MCF 10A (cell line): ENCODE measurements at regions of chr4 and their contacts with region 1.

Region 1: DNA sequence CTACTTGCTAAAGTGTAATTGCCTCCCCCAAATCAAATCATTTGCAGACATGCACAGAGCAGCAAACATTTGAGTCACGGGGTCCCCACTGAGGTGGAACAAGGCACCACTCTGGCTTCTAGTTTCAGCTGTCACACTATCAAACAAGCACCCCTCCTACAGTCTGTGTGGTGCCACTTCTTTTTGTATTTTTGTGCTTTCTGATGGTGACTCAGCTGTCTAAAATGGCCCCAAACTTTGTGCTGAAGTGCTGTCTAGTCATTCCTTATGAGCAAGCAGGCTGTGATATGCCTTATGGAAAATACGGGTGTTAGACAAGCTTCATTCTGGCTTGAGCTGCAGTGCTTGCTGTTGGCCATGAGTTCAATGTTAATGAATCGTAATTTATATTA is 15.4 kb downstream of the IGFBP7 start:
- DNase-seq: no peak
- H3K4me3 Mint-ChIP-seq: no peak overlapping the region
- H3K27ac Mint-ChIP-seq: no peak overlapping the region
- H3K4me1 Mint-ChIP-seq: peaks cover 29% of the 10 kb centered on the region
- H3K27me3 Mint-ChIP-seq: no peaks in the 10 kb centered on the region
- CTCF ChIP-seq: no peak

Region 2: DNA sequence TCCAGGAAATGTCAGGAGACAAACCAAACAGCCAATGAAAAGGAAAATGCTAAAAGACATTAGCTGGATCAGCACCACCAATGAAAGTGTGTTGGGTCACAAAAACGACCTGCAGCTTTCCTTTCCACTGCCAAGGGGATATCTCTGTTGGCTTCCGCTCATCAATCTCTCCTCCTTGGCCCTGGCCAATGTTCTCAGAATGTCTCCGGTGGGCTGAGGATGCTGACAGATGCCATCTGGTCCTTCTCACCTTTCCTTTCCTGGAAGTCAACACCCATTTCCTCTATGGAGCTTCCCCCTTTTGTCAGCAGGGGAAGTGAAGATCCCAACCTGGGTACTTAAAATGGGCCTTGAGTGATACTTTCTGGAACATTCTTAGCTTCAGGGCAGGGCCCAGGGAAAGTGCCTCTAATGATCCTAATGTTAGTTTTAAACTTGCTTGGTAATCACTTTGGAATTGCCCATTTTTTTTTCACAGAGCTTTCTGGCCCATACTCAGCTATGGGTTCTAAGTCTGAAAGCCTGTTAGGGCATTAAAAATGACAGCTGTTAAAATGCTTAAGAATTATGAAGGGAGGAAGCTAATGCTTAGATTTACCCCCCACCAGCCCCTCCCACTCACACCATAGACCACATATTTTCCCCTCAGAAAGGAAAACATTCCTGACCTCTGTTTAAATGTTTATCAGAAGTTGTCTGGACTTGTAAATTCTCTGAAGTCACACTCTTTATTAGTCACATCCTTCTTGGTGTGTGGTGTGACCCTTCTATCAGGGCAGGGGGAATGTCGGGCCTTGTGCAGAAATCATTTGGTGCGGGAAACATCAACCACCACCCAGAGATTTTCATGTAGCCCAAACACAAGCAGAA is 13.8 kb before region 1 on chr4:
- CTCF ChIA-PET with region 1: interaction called, 5 read pairs
- POLR2A ChIA-PET with region 1: interaction called, 61 read pairs
- intact Hi-C with region 1: no loop called
- DNase-seq: peak; percentile 85
- H3K4me3 Mint-ChIP-seq: peak overlapping the region; percentile 3
- H3K27ac Mint-ChIP-seq: peak overlapping the region; percentile 93
- H3K4me1 Mint-ChIP-seq: peaks cover 38% of the 10 kb centered on the region
- H3K27me3 Mint-ChIP-seq: no peaks in the 10 kb centered on the region
- CTCF ChIP-seq: no peak